Activated naive CD4-positive, alpha-beta T cell treated with anti-CD3 and anti-CD28 coated beads, Interleukin-2, amount 10 ng/mL, durations not matched to agents 7 days and 5 days (primary cell): ENCODE measurements at regions of chr5 and their contacts with region 1.

Region 1: GRCh38 chr5:54867310-54867944 is 118.0 kb downstream of the ESM1 start:
- DNase-seq: no peak
- H3K4me3 Mint-ChIP-seq: no peak overlapping the region
- H3K27ac Mint-ChIP-seq: no peak overlapping the region
- H3K4me1 Mint-ChIP-seq: peaks cover 20% of the 10 kb centered on the region
- H3K27me3 Mint-ChIP-seq: peaks cover 42% of the 10 kb centered on the region

Region 2: DNA sequence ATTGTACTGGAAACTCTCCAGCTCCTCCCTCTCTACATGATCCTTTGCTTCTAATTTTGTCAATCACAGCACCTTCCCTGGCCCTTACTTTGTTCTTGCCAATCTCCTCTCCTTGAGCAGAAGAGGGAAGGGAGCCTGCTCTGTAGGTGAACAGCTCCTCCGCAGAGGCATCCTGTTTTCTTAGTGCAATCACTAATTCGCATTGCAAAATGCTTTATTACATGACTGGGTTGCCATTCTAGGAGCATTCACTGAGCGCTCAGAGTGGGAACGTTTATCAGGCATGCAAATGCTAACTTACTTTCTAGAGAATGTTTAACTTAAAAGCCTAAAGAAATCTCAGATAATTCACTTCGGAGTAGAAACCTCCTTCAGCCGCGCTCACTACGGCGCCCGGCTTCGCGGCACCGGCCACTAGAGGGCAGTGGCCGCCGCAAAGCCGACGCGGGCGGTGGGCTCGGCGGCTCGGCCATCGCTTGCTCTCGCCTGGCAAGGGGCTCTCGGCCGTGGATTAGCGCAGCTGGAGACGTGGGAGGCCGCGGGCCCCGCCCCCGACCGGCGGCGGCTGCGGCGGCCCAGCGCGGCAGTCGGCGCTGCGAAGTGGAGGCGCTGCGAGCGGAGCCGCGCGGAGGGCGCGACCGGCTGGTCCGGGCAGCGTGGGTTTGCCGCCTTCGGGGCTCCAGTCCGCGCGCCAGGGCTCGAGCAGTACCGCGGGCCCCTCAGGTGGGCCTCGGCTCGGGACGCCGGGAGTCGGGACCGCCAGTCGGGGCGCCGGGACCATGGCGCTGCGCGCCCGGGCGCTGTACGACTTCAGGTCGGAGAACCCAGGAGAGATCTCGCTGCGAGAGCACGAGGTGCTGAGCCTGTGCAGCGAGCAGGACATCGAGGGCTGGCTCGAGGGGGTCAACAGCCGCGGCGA is 350.0 kb before region 1 on chr5 and contains the start of gene SNX18:
- CTCF ChIA-PET with region 1: interaction called, 84 read pairs
- DNase-seq: peak; percentile 93
- H3K4me3 Mint-ChIP-seq: peak within 1 kb of the TSS; percentile 83
- H3K27ac Mint-ChIP-seq: peak within 1 kb of the TSS; percentile 74
- H3K4me1 Mint-ChIP-seq: peaks cover 45% of the 10 kb centered on the region
- H3K27me3 Mint-ChIP-seq: peaks cover 23% of the 10 kb centered on the region

Region 3: DNA sequence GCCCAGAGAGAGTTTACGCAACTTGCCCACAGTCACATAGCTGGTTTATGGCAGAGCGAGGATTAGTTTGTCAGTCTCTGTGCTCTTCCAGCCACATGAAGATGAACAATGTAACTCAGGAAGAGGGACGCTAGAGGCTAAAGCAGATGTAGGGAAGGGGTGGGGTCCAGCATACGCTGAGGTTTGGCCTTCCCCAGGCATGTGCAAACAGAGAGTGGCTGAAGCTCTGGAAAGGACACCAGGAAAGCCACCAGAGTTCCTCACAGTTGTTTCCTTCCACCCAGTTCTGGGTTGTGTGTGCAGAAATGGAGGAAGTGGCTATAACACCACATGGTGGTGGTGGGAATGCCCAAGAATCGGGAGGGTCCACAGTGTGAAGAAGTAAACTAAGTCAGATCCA is 289.9 kb before region 1 on chr5:
- CTCF ChIA-PET with region 1: no interaction called
- DNase-seq: no peak
- H3K4me3 Mint-ChIP-seq: no peak overlapping the region
- H3K27ac Mint-ChIP-seq: no peak overlapping the region
- H3K4me1 Mint-ChIP-seq: peaks cover 17% of the 10 kb centered on the region
- H3K27me3 Mint-ChIP-seq: peaks cover 18% of the 10 kb centered on the region

Region 4: DNA sequence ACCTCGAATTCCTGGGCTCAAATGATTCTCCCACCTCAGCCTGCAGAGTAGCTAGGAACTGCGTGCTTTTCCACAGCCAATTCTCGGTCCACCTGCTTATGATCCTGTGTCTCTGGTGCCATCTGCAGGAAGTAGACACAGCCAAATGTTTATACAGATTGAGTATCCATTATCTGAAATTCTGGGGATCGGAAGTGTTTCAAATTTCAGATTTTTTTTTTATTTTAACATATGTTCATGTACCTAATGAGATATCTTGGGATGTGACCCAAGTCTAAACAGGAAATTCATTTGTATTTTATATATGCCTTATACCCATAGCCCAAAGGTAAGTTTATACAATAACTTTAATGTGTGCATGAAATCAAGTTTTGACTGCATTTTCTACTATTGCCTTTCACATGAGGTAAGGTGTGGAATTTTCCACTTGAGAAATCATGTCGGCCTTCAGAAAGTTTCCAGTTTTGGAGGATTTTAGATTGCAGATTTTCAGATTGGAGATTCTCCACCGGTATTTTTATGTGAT is 28.5 kb after region 1 on chr5:
- CTCF ChIA-PET with region 1: interaction called, 11 read pairs
- DNase-seq: peak; percentile 39
- H3K4me3 Mint-ChIP-seq: no peak overlapping the region
- H3K27ac Mint-ChIP-seq: no peak overlapping the region
- H3K4me1 Mint-ChIP-seq: peaks cover 8% of the 10 kb centered on the region
- H3K27me3 Mint-ChIP-seq: peaks cover 74% of the 10 kb centered on the region